GM10248 (cell line): ENCODE measurements at regions of chr19 and their contacts with region 1.

Region 1: DNA sequence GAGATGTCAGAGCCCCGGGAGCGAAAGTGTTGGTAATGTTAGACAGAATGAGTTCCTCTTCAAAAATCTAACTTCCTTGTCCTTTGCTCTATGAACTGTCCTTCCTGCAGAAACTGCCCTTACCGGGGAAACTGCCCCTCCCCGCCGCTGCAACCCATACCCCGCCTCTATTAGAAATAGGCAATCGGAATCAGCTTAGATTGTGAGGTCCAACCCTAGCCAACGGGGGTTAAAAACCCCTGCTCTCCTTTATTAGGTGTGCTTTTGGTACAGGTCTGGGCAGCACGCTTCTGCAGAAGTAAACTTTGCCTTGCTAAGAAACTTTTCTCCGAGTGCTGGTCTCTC is 11.5 kb upstream of the CAPNS1 start:
- DNase-seq: no peak
- CTCF ChIP-seq: no peak

Region 2: DNA sequence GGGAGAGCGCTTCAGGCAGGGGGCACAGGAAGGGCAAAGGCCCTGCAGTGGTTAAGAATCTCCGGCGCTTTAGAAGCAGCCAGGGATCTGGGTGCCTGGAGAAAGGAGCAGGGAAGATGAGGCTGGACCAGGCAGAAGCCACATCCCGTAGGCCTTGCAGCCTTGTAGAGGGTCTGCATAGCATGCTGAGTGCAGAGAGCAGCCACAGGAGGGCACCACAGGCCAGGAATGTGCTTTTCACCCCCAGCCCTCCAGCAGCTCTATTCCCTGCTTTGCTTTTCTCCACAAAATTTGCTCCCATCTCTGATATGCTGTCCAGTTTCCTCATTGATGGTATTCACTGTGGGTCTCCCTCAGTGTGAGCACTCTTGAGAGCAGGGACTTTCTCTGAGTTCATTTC is 67.9 kb before region 1 on chr19:
- CTCF ChIA-PET with region 1: interaction called, 18 read pairs
- POLR2A ChIA-PET with region 1: no interaction called
- DNase-seq: peak; percentile 63
- CTCF ChIP-seq: peak; percentile 72

Region 3: GRCh38 chr19:36081385-36081784 is 47.0 kb before region 1 on chr19:
- CTCF ChIA-PET with region 1: no interaction called
- POLR2A ChIA-PET with region 1: no interaction called
- DNase-seq: no peak
- CTCF ChIP-seq: no peak

Region 4: GRCh38 chr19:36114763-36115452 is 13.5 kb before region 1 on chr19 and contains the start of gene POLR2I:
- CTCF ChIA-PET with region 1: interaction called, 43 read pairs
- POLR2A ChIA-PET with region 1: no interaction called
- DNase-seq: peak; percentile 98
- CTCF ChIP-seq: no peak

Region 5: GRCh38 chr19:36139473-36140303 is 11.3 kb after region 1 on chr19 and contains the start of gene CAPNS1:
- CTCF ChIA-PET with region 1: interaction called, 47 read pairs
- POLR2A ChIA-PET with region 1: no interaction called
- DNase-seq: peak; percentile 98
- CTCF ChIP-seq: no peak

Region 6: GRCh38 chr19:36169084-36169760 is 40.9 kb after region 1 on chr19:
- CTCF ChIA-PET with region 1: interaction called, 43 read pairs
- POLR2A ChIA-PET with region 1: no interaction called
- DNase-seq: no peak
- CTCF ChIP-seq: no peak